MCF 10A (cell line): ENCODE measurements at regions of chr15 and their contacts with region 1.

Region 1: GRCh38 chr15:64653760-64654159 is 121.6 kb downstream of the RBPMS2 start:
- DNase-seq: peak; percentile 11
- H3K4me3 Mint-ChIP-seq: no peak overlapping the region
- H3K27ac Mint-ChIP-seq: no peak overlapping the region
- H3K4me1 Mint-ChIP-seq: peaks cover 6% of the 10 kb centered on the region
- H3K27me3 Mint-ChIP-seq: no peaks in the 10 kb centered on the region
- CTCF ChIP-seq: peak; percentile 45

Region 2: DNA sequence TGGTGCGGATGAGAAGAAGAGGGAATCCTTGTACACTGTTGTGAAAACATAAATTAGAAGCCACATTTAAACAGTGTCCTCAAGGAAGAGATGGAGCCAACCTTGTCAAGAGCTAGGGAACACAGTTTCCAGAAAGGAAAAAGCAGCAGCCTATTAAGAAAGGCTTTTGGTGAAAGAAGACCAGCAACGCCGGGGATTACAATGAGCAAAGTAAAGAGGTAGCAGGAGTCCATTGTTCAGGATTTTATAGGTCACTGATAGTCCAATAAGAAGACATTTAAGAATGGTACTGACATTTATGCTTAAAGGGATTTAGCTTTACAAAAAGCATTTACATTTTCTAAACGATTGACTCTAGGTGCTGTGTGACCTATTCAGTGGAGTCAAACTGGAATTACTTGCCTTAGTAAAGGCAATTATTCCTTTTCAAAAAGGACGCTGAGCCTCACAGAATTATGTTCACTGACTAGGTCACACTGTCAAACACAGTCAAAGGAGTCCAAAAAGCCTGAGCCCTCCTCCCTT is 338.6 kb before region 1 on chr15:
- CTCF ChIA-PET with region 1: no interaction called
- POLR2A ChIA-PET with region 1: no interaction called
- intact Hi-C with region 1: no loop called
- DNase-seq: no peak
- H3K4me3 Mint-ChIP-seq: no peak overlapping the region
- H3K27ac Mint-ChIP-seq: no peak overlapping the region
- H3K4me1 Mint-ChIP-seq: no peaks in the 10 kb centered on the region
- H3K27me3 Mint-ChIP-seq: no peaks in the 10 kb centered on the region
- CTCF ChIP-seq: no peak

Region 3: DNA sequence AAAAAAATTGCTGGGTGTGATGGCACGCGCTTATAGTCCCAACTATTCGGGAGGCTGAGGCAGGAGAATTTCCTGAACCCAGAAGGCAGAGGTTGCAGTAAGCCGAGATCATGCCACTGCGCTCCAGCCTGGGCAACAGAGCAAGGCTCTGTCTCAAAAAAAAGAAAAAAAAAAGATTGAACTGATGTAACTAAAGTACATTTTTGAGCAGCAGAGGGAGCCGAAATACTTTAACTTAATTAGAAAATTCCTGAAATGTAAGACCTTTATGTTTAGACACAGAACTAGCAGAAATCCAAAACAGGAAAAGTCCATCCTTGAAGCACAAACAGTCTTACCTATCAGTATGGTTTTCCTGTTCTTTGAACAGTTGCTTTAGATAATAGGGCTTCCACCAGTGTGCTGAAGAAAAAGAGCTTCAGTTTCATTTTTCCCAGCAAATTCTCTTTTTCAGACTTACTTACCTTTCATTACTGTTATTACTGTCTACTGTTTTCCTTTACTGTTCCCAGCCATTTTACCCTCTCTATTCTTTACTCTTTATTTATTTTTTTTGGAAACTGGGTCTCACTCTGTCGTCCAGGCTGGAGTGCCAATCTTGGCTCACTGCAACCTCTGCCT is 226.8 kb before region 1 on chr15:
- CTCF ChIA-PET with region 1: interaction called, 16 read pairs
- POLR2A ChIA-PET with region 1: interaction called, 6 read pairs
- intact Hi-C with region 1: loop called (anchors 1 kb)
- DNase-seq: peak; percentile 35
- H3K4me3 Mint-ChIP-seq: no peak overlapping the region
- H3K27ac Mint-ChIP-seq: no peak overlapping the region
- H3K4me1 Mint-ChIP-seq: peaks cover 7% of the 10 kb centered on the region
- H3K27me3 Mint-ChIP-seq: no peaks in the 10 kb centered on the region
- CTCF ChIP-seq: peak; percentile 39

Region 4: GRCh38 chr15:64634576-64635498 is 18.9 kb before region 1 on chr15:
- CTCF ChIA-PET with region 1: interaction called, 12 read pairs
- POLR2A ChIA-PET with region 1: interaction called, 13 read pairs
- intact Hi-C with region 1: no loop called
- DNase-seq: no peak
- H3K4me3 Mint-ChIP-seq: no peak overlapping the region
- H3K27ac Mint-ChIP-seq: peak overlapping the region; percentile 3
- H3K4me1 Mint-ChIP-seq: peaks cover 14% of the 10 kb centered on the region
- H3K27me3 Mint-ChIP-seq: no peaks in the 10 kb centered on the region
- CTCF ChIP-seq: no peak

Region 5: GRCh38 chr15:64642875-64643274 is 10.9 kb before region 1 on chr15:
- CTCF ChIA-PET with region 1: interaction called, 17 read pairs
- POLR2A ChIA-PET with region 1: no interaction called
- intact Hi-C with region 1: no loop called
- DNase-seq: no peak
- H3K4me3 Mint-ChIP-seq: no peak overlapping the region
- H3K27ac Mint-ChIP-seq: no peak overlapping the region
- H3K4me1 Mint-ChIP-seq: no peaks in the 10 kb centered on the region
- H3K27me3 Mint-ChIP-seq: no peaks in the 10 kb centered on the region
- CTCF ChIP-seq: no peak

Region 6: DNA sequence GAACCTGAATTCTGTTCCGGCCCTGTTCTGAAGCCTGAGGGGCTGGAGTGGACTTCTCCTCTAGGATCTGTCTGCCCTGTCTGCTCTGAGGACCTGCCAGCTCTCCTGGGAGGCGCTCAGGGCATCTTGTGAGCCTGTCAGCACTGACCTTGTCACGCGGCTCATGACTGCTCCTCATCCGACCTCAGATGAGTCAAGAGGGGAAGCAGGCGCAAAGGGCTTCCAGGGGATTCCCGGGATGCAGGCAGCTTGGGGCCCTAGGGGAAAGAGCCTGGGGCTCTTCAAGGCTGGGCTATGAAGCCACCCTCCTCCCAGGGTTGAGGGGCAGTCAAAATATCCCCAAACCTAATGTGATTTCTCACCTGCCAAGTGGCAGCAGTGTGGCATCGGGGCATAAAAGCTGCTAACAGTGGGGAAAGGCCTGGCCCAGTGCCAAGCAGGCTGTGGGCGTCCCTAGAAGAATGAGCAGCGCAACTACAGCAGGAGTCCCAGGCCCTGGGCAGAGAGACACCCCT is 230.3 kb after region 1 on chr15:
- CTCF ChIA-PET with region 1: no interaction called
- POLR2A ChIA-PET with region 1: no interaction called
- intact Hi-C with region 1: no loop called
- DNase-seq: peak; percentile 79
- H3K4me3 Mint-ChIP-seq: no peak overlapping the region
- H3K27ac Mint-ChIP-seq: no peak overlapping the region
- H3K4me1 Mint-ChIP-seq: peaks cover 9% of the 10 kb centered on the region
- H3K27me3 Mint-ChIP-seq: no peaks in the 10 kb centered on the region
- CTCF ChIP-seq: no peak